AG04450 (cell line): ENCODE measurements at regions of chr11 and their contacts with region 1.

Region 1: DNA sequence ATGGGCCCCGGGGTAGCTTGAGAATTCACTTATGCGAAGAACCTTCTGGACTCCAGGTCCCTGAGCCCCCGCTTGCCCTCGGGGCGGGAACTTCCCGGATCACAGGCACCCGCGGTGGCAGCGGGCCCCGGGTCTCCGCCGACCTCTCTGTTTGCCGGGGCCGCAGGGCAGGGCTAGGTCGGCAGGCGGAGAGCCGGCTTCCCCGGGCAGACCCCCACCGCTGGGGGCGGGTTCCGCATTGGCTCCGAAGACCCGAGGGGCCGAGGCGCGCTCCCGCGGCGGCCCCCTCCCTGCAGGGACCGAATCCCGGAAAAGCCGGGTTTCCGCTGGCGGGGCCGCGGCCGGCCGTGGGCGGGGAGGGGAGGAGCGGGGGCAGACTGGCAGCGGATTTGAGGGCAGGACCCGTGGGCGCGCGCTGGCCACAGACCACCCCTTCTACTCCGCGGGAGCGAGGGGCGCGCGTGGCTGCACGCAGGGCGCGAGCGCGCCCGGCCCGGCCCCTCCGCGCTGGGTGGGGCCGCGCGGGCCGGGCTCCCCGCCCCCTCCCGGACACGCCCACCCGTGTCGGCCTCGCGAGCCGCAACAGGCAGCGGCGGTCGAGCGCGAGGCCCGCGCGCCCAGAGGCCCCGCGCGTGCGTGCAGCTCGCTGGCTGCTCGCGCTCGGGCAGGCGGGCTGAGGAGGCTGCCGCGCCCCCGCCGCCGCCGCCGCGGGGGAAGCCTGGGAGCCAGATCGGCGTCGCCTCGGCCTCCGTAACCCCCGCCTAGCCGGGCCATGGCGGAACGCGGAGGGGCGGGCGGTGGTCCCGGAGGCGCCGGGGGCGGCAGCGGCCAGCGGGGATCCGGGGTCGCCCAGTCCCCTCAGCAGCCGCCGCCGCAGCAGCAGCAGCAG is at the start of gene PACS1:
- DNase-seq: peak; percentile 56
- H3K4me3 ChIP-seq: peak within 1 kb of the TSS; percentile 76
- H3K27ac ChIP-seq: peak within 1 kb of the TSS; percentile 90
- H3K27me3 ChIP-seq: no peaks in the 10 kb centered on the region
- CTCF ChIP-seq: no peak
- polyA plus RNA-seq, gene PACS1: 27.1 and 32.5 TPM in 2 replicates

Region 2: DNA sequence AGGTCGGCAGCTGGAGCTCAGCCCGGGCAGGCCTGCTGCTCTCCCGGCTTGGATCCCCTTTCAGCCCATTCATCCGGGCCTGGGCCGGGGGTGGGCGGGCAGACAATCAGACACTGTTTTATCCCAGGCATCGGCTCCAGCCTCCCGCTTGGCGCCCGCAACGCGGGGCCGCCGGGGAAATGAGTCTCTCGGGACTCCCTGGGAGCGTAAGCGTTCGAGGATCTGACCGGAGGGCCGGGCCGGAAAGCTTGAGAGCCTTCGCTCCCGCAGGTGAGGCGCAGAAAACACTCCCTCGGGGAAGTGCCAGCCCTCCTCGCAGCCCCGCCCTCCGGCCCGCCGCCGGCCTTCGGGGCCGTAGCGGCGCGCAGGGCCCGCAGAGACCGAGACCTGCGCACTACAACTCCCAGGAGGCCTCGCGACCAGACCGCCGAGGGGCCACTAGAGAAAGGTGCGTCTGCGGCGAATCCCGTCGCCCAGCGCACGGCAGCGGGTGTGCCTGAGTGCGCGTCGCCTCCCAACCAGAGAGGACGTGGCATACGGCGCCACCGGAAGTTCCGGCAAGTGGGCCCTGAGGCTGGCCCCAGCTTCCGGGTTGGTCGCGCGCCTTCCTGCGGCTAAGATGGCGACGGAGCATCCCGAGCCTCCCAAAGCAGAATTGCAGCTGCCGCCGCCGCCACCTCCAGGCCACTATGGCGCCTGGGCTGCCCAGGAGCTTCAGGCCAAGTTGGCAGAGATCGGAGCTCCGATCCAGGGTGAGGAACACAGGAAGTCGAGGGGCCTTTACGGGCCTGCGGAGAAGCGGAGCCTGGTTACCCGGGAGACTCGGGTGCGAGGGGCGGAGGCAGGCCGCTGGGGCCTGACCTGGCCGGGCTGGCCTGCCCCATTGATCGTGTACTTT is 17.9 kb before region 1 on chr11 and contains the start of gene SF3B2:
- CTCF ChIA-PET with region 1: interaction called, 103 read pairs
- POLR2A ChIA-PET with region 1: interaction called, 12 read pairs
- DNase-seq: peak; percentile 96
- H3K4me3 ChIP-seq: peak within 1 kb of the TSS; percentile 87
- H3K27ac ChIP-seq: peak within 1 kb of the TSS; percentile 83
- H3K27me3 ChIP-seq: peaks cover 4% of the 10 kb centered on the region
- CTCF ChIP-seq: no peak
- polyA plus RNA-seq, gene SF3B2: 88.2 and 97.1 TPM in 2 replicates

Region 3: GRCh38 chr11:66081505-66081904 is 11.5 kb after region 1 on chr11:
- CTCF ChIA-PET with region 1: interaction called, 14 read pairs
- POLR2A ChIA-PET with region 1: interaction called, 3 read pairs
- DNase-seq: no peak
- H3K4me3 ChIP-seq: no peak overlapping the region
- H3K27ac ChIP-seq: no peak overlapping the region
- H3K27me3 ChIP-seq: no peaks in the 10 kb centered on the region
- CTCF ChIP-seq: no peak

Region 4: GRCh38 chr11:66126808-66127555 is 57.0 kb after region 1 on chr11:
- CTCF ChIA-PET with region 1: interaction called, 10 read pairs
- POLR2A ChIA-PET with region 1: interaction called, 3 read pairs
- DNase-seq: no peak
- H3K4me3 ChIP-seq: no peak overlapping the region
- H3K27ac ChIP-seq: peak overlapping the region; percentile 81
- H3K27me3 ChIP-seq: no peaks in the 10 kb centered on the region
- CTCF ChIP-seq: no peak

Region 5: GRCh38 chr11:66136752-66137123 is 66.8 kb after region 1 on chr11:
- CTCF ChIA-PET with region 1: interaction called, 14 read pairs
- POLR2A ChIA-PET with region 1: no interaction called
- DNase-seq: no peak
- H3K4me3 ChIP-seq: no peak overlapping the region
- H3K27ac ChIP-seq: peak overlapping the region; percentile 73
- H3K27me3 ChIP-seq: no peaks in the 10 kb centered on the region
- CTCF ChIP-seq: no peak